Endothelial cell of umbilical vein (primary cell): ENCODE measurements at regions of chr1 and their contacts with region 1.

Region 1: DNA sequence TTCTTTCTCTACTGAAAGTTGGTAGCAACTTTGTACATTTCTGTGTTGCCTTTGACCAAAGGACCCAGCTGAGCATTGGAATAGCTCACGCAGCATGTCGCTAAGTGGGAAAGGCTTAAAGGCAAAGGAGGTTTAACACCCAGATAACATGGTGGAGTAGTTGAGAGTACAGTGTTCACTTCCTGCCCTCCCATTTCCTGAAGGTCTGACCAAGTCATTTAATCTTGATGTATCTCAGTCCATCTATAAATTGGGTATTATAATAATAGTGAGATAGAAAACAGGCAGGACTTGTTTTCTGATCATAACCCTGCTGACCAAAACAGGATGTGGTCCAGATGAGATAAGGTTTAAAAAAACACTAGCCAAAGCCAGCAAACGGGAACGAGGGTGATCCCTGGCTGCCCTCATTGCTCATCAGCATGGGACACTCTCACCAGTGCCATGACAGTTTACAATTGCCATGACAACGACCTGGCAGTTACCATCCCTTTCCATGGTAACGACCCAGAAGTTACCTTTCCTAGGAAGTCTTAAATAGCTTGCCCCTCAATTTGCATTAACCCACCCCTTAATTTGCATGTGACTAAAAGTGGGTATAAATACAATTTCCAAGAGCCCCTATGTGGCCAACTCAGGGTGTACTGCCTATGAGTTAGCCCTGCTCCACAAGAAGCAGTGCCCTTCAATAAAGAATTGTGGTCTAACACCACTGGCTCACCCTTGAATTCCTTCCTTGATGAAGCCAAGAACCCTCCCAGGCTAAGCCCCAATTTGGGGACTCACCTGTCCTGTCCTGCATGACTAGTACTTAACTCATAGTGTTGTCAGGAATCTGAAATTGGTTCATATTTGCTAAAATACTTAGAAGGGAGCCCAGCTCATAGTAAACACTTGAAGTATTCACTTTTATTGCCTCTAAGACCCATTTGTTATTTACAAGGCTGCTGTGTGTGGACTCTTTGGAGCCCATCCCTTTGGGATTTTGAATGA is 28.4 kb upstream of the FHAD1 start:
- DNase-seq: peak; percentile 98
- H3K4me3 ChIP-seq: no peak overlapping the region
- H3K27ac ChIP-seq: peak overlapping the region; percentile 42
- H3K4me1 ChIP-seq: peaks cover 15% of the 10 kb centered on the region
- H3K27me3 ChIP-seq: no peaks in the 10 kb centered on the region
- CTCF ChIP-seq: no peak
- POLR2A ChIP-seq: peak; percentile 54

Region 2: DNA sequence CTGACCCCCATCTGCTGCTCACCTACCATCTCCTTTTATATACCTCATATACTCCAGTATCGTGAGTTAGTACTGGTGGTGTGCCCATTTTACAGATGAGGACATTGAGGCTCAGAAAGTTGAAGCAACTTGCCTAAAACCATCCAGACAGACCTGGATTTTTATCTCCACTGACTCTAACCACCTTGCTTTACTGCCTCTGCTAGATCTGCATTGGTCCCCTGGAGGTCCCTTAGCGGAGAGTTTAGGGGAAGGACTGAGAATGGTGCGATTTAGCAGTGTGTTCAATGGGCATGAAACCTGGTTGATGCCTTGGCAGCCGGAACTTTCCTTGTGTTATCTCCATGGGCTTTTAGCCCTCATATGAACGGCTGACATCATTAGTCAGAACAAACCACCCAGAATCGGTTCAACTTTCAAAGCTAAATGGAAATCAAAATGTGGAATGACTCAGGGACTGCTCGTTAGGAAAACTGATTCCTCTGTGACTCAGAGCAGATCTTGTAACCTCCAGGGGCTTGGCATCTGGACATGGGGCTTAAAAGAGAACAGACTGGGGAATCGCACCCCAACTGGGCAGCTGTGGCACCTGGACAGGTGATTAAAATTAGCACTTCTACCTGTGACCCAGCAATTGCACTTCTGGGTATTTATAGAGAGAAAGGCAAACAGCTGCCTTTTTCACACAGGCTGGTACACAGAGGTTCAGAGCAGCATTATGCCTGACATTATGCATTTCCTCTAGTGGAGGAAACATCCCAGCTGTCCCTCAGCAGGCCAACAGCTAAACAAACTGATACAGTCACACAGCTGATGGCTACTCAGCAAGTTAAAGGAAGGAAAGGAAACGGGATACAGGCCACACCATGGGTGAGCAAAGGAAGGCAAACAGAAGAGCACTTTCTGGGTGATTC is 39.8 kb before region 1 on chr1:
- CTCF ChIA-PET with region 1: interaction called, 3 read pairs
- POLR2A ChIA-PET with region 1: no interaction called
- dilution Hi-C with region 1: no loop called
- intact Hi-C with region 1: loop called (anchors 1 kb)
- DNase-seq: peak; percentile 91
- H3K4me3 ChIP-seq: no peak overlapping the region
- H3K27ac ChIP-seq: peak overlapping the region; percentile 90
- H3K4me1 ChIP-seq: peaks cover 32% of the 10 kb centered on the region
- H3K27me3 ChIP-seq: no peaks in the 10 kb centered on the region
- CTCF ChIP-seq: no peak
- POLR2A ChIP-seq: no peak

Region 3: GRCh38 chr1:15196807-15197530 is 21.6 kb before region 1 on chr1:
- CTCF ChIA-PET with region 1: interaction called, 5 read pairs
- POLR2A ChIA-PET with region 1: no interaction called
- dilution Hi-C with region 1: no loop called
- intact Hi-C with region 1: loop called (anchors 1 kb)
- DNase-seq: no peak
- H3K4me3 ChIP-seq: no peak overlapping the region
- H3K27ac ChIP-seq: no peak overlapping the region
- H3K4me1 ChIP-seq: peaks cover 14% of the 10 kb centered on the region
- H3K27me3 ChIP-seq: no peaks in the 10 kb centered on the region
- CTCF ChIP-seq: no peak
- POLR2A ChIP-seq: no peak

Region 4: DNA sequence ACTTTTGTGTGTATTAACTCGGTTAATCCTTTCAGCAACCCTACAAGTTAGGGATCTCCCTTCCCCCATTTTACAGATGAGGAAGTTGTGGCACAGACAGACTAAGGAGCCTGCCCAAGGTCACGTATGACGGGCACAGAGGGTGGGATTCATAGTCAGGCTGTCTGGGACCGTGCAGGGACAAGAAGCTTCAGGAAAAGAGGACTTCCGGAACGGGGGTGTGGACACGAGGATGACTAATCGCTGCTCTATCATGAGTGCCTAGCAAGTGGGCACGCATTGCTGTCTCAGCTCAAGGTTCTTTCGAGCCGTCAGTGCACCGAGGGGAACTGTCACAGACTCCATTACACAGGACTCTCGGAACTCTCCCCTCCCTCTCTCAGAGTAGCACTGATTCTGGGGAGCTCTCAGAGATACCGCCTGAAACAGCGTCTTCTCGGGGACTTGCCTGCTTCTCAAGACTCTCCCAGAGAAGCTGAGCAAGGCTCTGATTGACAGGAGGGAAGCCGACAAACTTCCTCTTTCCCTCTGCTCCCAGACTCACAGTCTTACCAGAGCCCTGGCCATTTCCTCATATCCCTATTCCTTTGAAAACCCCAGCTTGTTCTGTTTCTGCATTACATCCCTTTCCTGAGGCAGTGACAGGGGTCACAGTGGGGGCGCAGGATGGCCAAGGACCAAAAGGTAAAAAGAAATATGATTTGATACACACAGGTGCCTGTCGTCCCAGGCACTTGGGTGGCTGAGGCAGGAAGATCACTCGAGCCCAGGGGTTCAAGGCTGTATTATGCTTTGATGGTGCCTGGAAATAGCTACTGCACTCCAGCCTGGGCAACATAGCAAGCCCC is 42.8 kb after region 1 on chr1:
- CTCF ChIA-PET with region 1: no interaction called
- POLR2A ChIA-PET with region 1: no interaction called
- dilution Hi-C with region 1: no loop called
- intact Hi-C with region 1: loop called (anchors 2 kb)
- DNase-seq: peak; percentile 74
- H3K4me3 ChIP-seq: peak overlapping the region in 2 of 3 experiments; percentile 6 to 25
- H3K27ac ChIP-seq: peak overlapping the region; percentile 78
- H3K4me1 ChIP-seq: peaks cover 23% of the 10 kb centered on the region
- H3K27me3 ChIP-seq: peaks cover 0 to 5% of the 10 kb centered on the region in 2 experiments
- CTCF ChIP-seq: no peak
- POLR2A ChIP-seq: no peak

Region 5: GRCh38 chr1:15417365-15417934 is 198.9 kb after region 1 on chr1:
- CTCF ChIA-PET with region 1: no interaction called
- POLR2A ChIA-PET with region 1: no interaction called
- dilution Hi-C with region 1: no loop called
- intact Hi-C with region 1: loop called (anchors 5 kb)
- DNase-seq: peak; percentile 78
- H3K4me3 ChIP-seq: no peak overlapping the region
- H3K27ac ChIP-seq: peak overlapping the region; percentile 48
- H3K4me1 ChIP-seq: peaks cover 56% of the 10 kb centered on the region
- H3K27me3 ChIP-seq: no peaks in the 10 kb centered on the region
- CTCF ChIP-seq: no peak
- POLR2A ChIP-seq: peak; percentile 48

Region 6: GRCh38 chr1:15489052-15489736 is 270.6 kb after region 1 on chr1:
- CTCF ChIA-PET with region 1: no interaction called
- POLR2A ChIA-PET with region 1: no interaction called
- dilution Hi-C with region 1: no loop called
- intact Hi-C with region 1: no loop called
- DNase-seq: no peak
- H3K4me3 ChIP-seq: no peak overlapping the region
- H3K27ac ChIP-seq: no peak overlapping the region
- H3K4me1 ChIP-seq: peaks cover 7% of the 10 kb centered on the region
- H3K27me3 ChIP-seq: no peaks in the 10 kb centered on the region
- CTCF ChIP-seq: no peak
- POLR2A ChIP-seq: no peak